HCT116 (cell line): ENCODE measurements at regions of chr17 and their contacts with region 1.

Region 1: GRCh38 chr17:73092523-73093135 is at the start of gene SLC39A11:
- DNase-seq: peak; percentile 89
- ATAC-seq: peak; percentile 98
- H3K4me3 ChIP-seq: peak within 1 kb of the TSS; percentile 62 to 82
- H3K27ac ChIP-seq: peak within 1 kb of the TSS; percentile 31
- H3K4me1 ChIP-seq: peaks cover 7 to 14% of the 10 kb centered on the region in 2 experiments; a peak in 3 of 4 replicates
- H3K27me3 ChIP-seq: no peaks in the 10 kb centered on the region
- CTCF ChIP-seq: no peak
- POLR2A ChIP-seq: peak; percentile 24
- RAD21 ChIP-seq: no peak
- total RNA-seq, gene SLC39A11: 46.4 TPM

Region 2: GRCh38 chr17:73013816-73014663 is 78.6 kb before region 1 on chr17:
- CTCF ChIA-PET with region 1: no interaction called
- POLR2A ChIA-PET with region 1: no interaction called
- RAD21 ChIA-PET with region 1: no interaction called
- intact Hi-C with region 1: loop called (anchors 5 kb)
- DNase-seq: peak; percentile 73
- ATAC-seq: peak; percentile 89
- H3K4me3 ChIP-seq: no peak overlapping the region
- H3K27ac ChIP-seq: 0 out of 2 replicates have a peak overlapping the region, but pooled peaks have one; percentile 6
- H3K4me1 ChIP-seq: peaks cover 13 to 19% of the 10 kb centered on the region in 2 experiments
- H3K27me3 ChIP-seq: no peaks in the 10 kb centered on the region
- CTCF ChIP-seq: peak in 2 of 3 experiments; percentile 21 to 24; a peak in 3 of 6 replicates
- POLR2A ChIP-seq: no peak
- RAD21 ChIP-seq: peak; percentile 49